ENCODE measurements at regions of chr11 and their contacts with region 1.

Region 1: GRCh38 chr11:65569973-65570918 is at the start of gene ZNRD2:
- DNase-seq: peak; percentile 100
- ATAC-seq: peak; percentile 75
- H3K4me3 Mint-ChIP-seq: peak within 1 kb of the TSS; percentile 97
- H3K27ac Mint-ChIP-seq: peak within 1 kb of the TSS; percentile 96
- H3K4me1 Mint-ChIP-seq: peaks cover 60% of the 10 kb centered on the region
- H3K27me3 Mint-ChIP-seq: no peaks in the 10 kb centered on the region
- total RNA-seq, gene ZNRD2: 50.7 to 56.4 TPM

Region 2: DNA sequence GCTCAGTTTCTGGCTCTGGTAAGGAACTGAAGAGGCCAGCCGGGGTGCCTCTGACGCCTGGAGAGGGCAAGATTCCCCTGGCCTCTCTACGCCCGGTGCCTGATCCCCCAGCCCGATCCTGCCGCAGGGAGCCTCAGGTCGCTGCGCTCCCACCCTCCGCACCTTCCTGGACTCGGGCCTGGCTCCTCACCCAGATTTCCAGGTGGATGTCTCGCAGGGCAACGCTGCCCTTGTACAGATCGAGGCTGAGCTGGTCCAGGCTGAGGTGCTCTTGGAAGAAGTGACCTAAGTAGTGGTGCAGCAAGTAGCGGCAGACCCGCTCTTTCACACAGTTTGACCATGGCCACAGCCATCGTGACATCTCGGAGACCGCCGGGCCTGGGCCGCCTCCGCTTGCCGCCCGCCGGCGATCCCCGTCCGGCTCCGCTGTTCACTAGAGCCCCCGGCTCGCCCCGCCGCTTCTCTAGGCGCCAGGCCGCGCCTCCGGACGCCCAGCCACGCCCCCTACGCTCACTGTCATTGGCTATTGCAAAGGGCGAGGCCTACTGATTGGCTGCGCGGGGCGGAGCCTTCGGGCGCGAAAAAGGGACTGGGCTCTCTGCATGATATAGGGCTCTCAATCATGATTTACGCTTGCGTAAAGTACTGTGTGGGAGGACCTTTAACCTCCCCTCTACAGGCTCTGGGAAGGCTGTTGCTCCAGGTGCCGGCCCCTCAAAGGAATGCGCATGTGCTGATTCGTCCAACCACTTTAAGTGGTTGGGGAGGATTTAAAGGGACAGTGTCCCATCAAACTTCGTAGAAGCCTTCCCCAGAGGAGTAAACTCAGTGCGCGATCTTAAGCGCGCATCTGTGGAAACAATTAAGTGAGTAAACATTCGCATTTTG is 653.2 kb before region 1 on chr11 and contains the start of gene ATG2A:
- CTCF ChIA-PET with region 1: no interaction called
- POLR2A ChIA-PET with region 1: no interaction called
- intact Hi-C with region 1: loop called in 1 of 2 experiments (anchors 5 kb)
- DNase-seq: peak; percentile 99
- ATAC-seq: peak; percentile 99
- H3K4me3 Mint-ChIP-seq: peak within 1 kb of the TSS; percentile 90
- H3K27ac Mint-ChIP-seq: peak within 1 kb of the TSS; percentile 88
- H3K4me1 Mint-ChIP-seq: peaks cover 16% of the 10 kb centered on the region
- H3K27me3 Mint-ChIP-seq: no peaks in the 10 kb centered on the region
- total RNA-seq, gene ATG2A: 15.8 to 16.7 TPM

Region 3: DNA sequence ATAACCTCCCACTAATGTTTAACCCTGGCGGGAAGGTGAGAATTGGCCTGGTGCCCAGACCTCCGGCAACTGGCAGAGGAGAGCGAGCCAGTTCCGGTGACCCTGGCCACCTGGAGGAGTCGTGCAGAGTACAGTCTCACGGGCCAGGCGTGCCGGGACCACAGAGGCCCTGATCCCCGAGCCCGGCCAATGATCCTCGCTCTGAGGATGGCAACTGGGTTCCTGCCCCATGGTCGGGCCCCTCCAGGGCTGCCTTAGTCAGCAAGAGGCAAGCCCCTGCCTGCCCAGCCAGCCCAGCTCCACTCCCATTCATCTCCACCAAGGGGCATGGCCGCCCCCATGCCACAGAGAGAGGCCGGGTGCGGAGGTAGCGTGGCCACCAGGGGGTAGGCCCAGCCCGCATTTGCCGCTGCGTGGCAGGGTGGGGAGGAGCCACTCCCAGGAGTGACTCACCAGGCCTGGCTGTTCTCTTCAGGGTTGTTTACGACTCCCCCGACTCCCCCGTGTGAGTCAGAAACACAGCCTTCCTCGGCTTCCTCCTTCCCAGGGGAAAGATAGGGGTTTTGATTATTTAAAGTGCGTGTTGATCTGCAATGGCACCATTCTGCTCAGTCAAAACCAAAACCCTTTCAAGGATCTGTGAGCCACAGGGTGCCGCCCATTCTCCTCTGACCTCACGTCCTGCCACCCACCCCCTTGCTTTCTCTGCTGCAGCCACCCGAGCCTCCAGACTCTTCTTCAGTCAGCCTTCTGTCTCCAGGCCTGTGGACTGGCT is 188.0 kb before region 1 on chr11 and contains the start of gene SLC25A45:
- CTCF ChIA-PET with region 1: no interaction called
- POLR2A ChIA-PET with region 1: no interaction called
- intact Hi-C with region 1: loop called (anchors 1 to 5 kb)
- DNase-seq: peak; percentile 97
- ATAC-seq: peak; percentile 84
- H3K4me3 Mint-ChIP-seq: peak within 1 kb of the TSS; percentile 78
- H3K27ac Mint-ChIP-seq: peak within 1 kb of the TSS; percentile 97
- H3K4me1 Mint-ChIP-seq: peaks cover 37% of the 10 kb centered on the region
- H3K27me3 Mint-ChIP-seq: no peaks in the 10 kb centered on the region
- total RNA-seq, gene SLC25A45: 13.2 to 14.3 TPM

Region 4: GRCh38 chr11:65540297-65541092 is 29.8 kb before region 1 on chr11:
- CTCF ChIA-PET with region 1: interaction called, 42 read pairs
- POLR2A ChIA-PET with region 1: interaction called, 6 read pairs
- intact Hi-C with region 1: loop called (anchors 1 kb)
- DNase-seq: peak; percentile 93
- ATAC-seq: peak; percentile 89
- H3K4me3 Mint-ChIP-seq: peak overlapping the region; percentile 72
- H3K27ac Mint-ChIP-seq: peak overlapping the region; percentile 81
- H3K4me1 Mint-ChIP-seq: peaks cover 15% of the 10 kb centered on the region
- H3K27me3 Mint-ChIP-seq: no peaks in the 10 kb centered on the region

Region 5: GRCh38 chr11:65637794-65638317 is 67.6 kb after region 1 on chr11 and contains the start of gene SIPA1:
- CTCF ChIA-PET with region 1: interaction called, 3 read pairs
- POLR2A ChIA-PET with region 1: no interaction called
- intact Hi-C with region 1: loop called in 1 of 2 experiments (anchors 1 kb)
- DNase-seq: peak; percentile 86
- ATAC-seq: peak; percentile 67
- H3K4me3 Mint-ChIP-seq: peak within 1 kb of the TSS; percentile 90
- H3K27ac Mint-ChIP-seq: peak within 1 kb of the TSS; percentile 95
- H3K4me1 Mint-ChIP-seq: peaks cover 42% of the 10 kb centered on the region
- H3K27me3 Mint-ChIP-seq: no peaks in the 10 kb centered on the region
- total RNA-seq, gene SIPA1: 181 to 202 TPM

Region 6: DNA sequence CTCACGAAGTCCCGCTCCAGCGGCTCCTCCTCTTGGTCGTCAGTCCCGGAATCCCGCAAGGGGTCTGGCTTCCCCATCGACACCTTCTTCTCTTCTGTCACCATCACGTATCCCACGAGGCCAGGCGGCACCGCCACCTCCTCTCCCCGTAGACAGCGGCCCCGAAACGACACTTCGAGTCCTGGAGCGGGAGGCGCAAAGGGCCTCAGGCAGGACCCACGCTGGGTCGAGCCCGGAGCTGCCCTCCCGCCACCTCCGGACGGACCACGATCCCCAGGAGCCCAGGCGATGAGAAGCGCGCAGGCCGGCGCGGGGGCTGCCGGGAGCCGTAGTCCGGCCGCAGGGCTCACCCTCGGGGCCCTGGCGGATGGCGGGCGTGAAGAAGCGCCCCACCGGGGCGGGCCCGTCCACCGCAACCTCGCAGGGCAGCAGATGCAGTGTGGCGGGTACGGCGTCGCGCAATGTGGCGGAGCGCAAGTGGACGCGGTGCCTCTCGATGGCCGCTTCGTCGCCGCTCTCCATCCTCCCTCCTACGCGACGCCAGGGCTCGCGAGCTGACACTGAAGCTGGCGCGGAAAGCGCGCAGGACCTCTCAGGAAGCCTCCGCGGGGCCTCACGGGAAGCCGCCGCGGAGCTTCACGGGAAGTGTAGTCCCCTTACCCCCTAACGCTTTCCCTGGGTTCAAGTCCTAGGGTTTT is 150.1 kb after region 1 on chr11 and contains the start of gene RNASEH2C:
- CTCF ChIA-PET with region 1: no interaction called
- POLR2A ChIA-PET with region 1: no interaction called
- intact Hi-C with region 1: no loop called
- DNase-seq: peak; percentile 92
- ATAC-seq: peak; percentile 94
- H3K4me3 Mint-ChIP-seq: peak within 1 kb of the TSS; percentile 84
- H3K27ac Mint-ChIP-seq: peak within 1 kb of the TSS; percentile 88
- H3K4me1 Mint-ChIP-seq: peaks cover 23% of the 10 kb centered on the region
- H3K27me3 Mint-ChIP-seq: no peaks in the 10 kb centered on the region
- total RNA-seq, gene RNASEH2C: 72.5 to 96.8 TPM

Region 7: DNA sequence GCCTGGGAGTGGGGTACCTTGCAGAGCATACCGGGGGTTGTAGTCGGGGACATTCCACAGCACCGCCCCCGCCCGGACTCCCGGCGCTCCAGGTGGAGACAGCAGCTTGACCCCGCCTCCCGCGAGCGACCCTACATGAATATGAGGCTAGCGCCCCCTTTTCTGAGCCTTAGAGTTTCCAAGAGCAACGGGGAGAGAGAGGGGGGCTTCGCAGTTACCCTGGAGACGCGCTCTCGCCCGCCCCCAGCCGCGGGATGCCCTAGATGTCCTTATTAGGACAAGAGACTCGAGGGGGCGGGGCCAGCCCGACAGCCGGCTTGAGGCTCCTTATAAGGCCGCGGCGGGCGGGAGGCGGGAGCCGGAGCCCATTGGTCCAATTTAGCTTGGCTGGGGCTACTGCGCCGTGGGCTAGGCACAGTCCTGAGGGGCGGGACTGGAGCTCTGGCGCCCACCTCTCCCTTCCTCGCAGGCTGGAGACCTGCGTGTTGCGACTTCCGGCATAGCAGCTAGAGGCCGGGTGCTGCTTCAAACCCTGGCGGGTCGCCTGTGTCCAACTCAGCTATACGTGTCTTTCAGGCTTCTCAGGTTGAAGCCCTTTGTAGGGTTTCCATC is 289.1 kb after region 1 on chr11:
- CTCF ChIA-PET with region 1: interaction called, 4 read pairs
- POLR2A ChIA-PET with region 1: no interaction called
- intact Hi-C with region 1: loop called (anchors 1 to 5 kb)
- DNase-seq: peak; percentile 99
- ATAC-seq: peak; percentile 73
- H3K4me3 Mint-ChIP-seq: peak overlapping the region; percentile 91
- H3K27ac Mint-ChIP-seq: peak overlapping the region; percentile 99
- H3K4me1 Mint-ChIP-seq: peaks cover 42% of the 10 kb centered on the region
- H3K27me3 Mint-ChIP-seq: no peaks in the 10 kb centered on the region

Region 8: GRCh38 chr11:66051766-66052663 is 481.8 kb after region 1 on chr11 and contains the start of gene SF3B2:
- CTCF ChIA-PET with region 1: no interaction called
- POLR2A ChIA-PET with region 1: no interaction called
- intact Hi-C with region 1: loop called in 1 of 2 experiments (anchors 2 kb)
- DNase-seq: peak; percentile 99
- ATAC-seq: peak; percentile 99
- H3K4me3 Mint-ChIP-seq: peak within 1 kb of the TSS; percentile 91
- H3K27ac Mint-ChIP-seq: peak within 1 kb of the TSS; percentile 95
- H3K4me1 Mint-ChIP-seq: peaks cover 36% of the 10 kb centered on the region
- H3K27me3 Mint-ChIP-seq: peaks cover 4% of the 10 kb centered on the region
- total RNA-seq, gene SF3B2: 265 to 270 TPM